Activated CD8-positive, alpha-beta T cell treated with anti-CD3 and anti-CD28 coated beads for 36 hours (primary cell): ENCODE measurements at regions of chr5 and their contacts with region 1.

Region 1: GRCh38 chr5:102778478-102778877 is 23.4 kb downstream of the PAM start:
- DNase-seq: peak; percentile 21
- ATAC-seq: peak; percentile 84
- H3K4me3 Mint-ChIP-seq: peak overlapping the region; percentile 12
- H3K27ac Mint-ChIP-seq: peak overlapping the region; percentile 76
- H3K4me1 Mint-ChIP-seq: peaks cover 74% of the 10 kb centered on the region
- H3K27me3 Mint-ChIP-seq: no peaks in the 10 kb centered on the region
- CTCF ChIP-seq: no peak

Region 2: GRCh38 chr5:102755686-102756371 is 22.6 kb before region 1 on chr5:
- CTCF ChIA-PET with region 1: interaction called, 36 read pairs
- POLR2A ChIA-PET with region 1: interaction called, 4 read pairs
- intact Hi-C with region 1: no loop called
- DNase-seq: peak; percentile 89
- ATAC-seq: peak; percentile 82
- H3K4me3 Mint-ChIP-seq: peak overlapping the region; percentile 99
- H3K27ac Mint-ChIP-seq: peak overlapping the region; percentile 97
- H3K4me1 Mint-ChIP-seq: peaks cover 56% of the 10 kb centered on the region
- H3K27me3 Mint-ChIP-seq: peaks cover 8% of the 10 kb centered on the region
- CTCF ChIP-seq: no peak

Region 3: GRCh38 chr5:102762095-102762534 is 16.4 kb before region 1 on chr5:
- CTCF ChIA-PET with region 1: interaction called, 36 read pairs
- POLR2A ChIA-PET with region 1: interaction called, 3 read pairs
- intact Hi-C with region 1: loop called (anchors 2 kb)
- DNase-seq: no peak
- ATAC-seq: peak; percentile 64
- H3K4me3 Mint-ChIP-seq: peak overlapping the region; percentile 61
- H3K27ac Mint-ChIP-seq: peak overlapping the region; percentile 82
- H3K4me1 Mint-ChIP-seq: peaks cover 82% of the 10 kb centered on the region
- H3K27me3 Mint-ChIP-seq: no peaks in the 10 kb centered on the region
- CTCF ChIP-seq: no peak

Region 4: GRCh38 chr5:102792705-102793104 is 14.2 kb after region 1 on chr5:
- CTCF ChIA-PET with region 1: interaction called, 17 read pairs
- POLR2A ChIA-PET with region 1: no interaction called
- intact Hi-C with region 1: no loop called
- DNase-seq: no peak
- ATAC-seq: peak; percentile 47
- H3K4me3 Mint-ChIP-seq: no peak overlapping the region
- H3K27ac Mint-ChIP-seq: no peak overlapping the region
- H3K4me1 Mint-ChIP-seq: peaks cover 23% of the 10 kb centered on the region
- H3K27me3 Mint-ChIP-seq: no peaks in the 10 kb centered on the region
- CTCF ChIP-seq: no peak

Region 5: GRCh38 chr5:103041071-103041676 is 262.7 kb after region 1 on chr5:
- CTCF ChIA-PET with region 1: interaction called, 4 read pairs
- POLR2A ChIA-PET with region 1: no interaction called
- intact Hi-C with region 1: loop called (anchors 10 kb)
- DNase-seq: no peak
- ATAC-seq: no peak
- H3K4me3 Mint-ChIP-seq: no peak overlapping the region
- H3K27ac Mint-ChIP-seq: no peak overlapping the region
- H3K4me1 Mint-ChIP-seq: no peaks in the 10 kb centered on the region
- H3K27me3 Mint-ChIP-seq: peaks cover under 1% of the 10 kb centered on the region
- CTCF ChIP-seq: peak; percentile 52

Region 6: DNA sequence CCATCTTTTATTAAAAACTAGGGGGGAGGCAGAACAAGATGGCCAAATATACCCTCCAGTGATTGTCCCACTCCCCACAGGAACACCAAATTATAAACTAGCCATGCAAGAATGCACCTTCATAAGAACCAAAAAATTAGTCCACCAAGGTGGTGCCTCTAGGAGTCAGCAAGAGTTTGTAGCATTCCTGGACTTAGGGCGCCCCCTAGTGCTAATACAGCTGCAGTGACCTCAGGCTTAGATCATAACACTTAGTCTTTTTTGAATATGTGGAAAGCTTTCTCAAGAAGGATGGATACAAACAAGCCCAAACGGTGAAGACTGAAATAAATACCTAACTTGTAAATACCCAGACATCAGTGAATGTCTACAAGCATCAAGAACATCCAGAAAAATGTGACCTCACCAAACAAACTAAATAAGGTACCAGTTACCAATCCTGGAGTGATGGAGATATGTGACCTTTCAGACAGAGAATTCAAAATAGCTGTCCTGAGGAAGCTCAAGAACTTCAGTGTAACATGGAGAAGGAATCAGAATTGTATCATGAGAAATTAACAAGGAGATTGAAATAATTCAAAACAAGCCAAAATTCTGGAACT is 360.9 kb after region 1 on chr5:
- CTCF ChIA-PET with region 1: interaction called, 10 read pairs
- POLR2A ChIA-PET with region 1: no interaction called
- intact Hi-C with region 1: loop called (anchors 10 kb)
- DNase-seq: peak; percentile 91
- ATAC-seq: peak; percentile 94
- H3K4me3 Mint-ChIP-seq: no peak overlapping the region
- H3K27ac Mint-ChIP-seq: no peak overlapping the region
- H3K4me1 Mint-ChIP-seq: peaks cover 5% of the 10 kb centered on the region
- H3K27me3 Mint-ChIP-seq: no peaks in the 10 kb centered on the region
- CTCF ChIP-seq: peak; percentile 86